ENCODE measurements at regions of chr2 and their contacts with region 1.

Region 1: DNA sequence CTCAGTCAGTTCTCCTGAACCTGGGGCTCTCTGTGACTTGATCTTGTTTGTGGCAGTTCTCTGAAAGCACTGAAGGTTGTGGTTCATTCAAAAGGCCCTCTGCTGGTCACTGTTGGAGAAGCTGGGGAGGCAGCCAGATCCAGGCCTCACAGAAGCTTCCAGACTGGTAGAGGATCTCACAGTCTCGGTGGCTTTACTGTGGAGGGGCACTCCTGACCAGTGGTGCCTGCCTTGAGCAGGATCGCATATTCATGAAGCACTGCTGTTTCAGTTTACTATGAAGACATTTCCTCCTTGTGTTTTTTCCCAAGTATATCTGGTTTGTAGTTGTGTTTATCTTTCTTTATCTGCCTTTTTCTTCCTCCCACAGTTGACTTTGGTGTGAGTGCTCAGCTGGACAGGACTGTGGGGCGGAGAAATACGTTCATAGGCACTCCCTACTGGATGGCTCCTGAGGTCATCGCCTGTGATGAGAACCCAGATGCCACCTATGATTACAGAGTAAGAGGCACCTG is 133.9 kb downstream of the MAP4K4 start:
- DNase-seq: no peak
- ATAC-seq: peak; percentile 91
- H3K4me3 ChIP-seq: no peak overlapping the region
- H3K27ac ChIP-seq: no peak overlapping the region
- H3K4me1 ChIP-seq: peaks cover 6% of the 10 kb centered on the region
- H3K27me3 ChIP-seq: no peaks in the 10 kb centered on the region
- CTCF ChIP-seq: peak; percentile 72 to 79 (median 75)
- EP300 ChIP-seq: no peak
- POLR2A ChIP-seq: no peak
- RAD21 ChIP-seq: peak; percentile 68

Region 2: GRCh38 chr2:101419096-101419663 is 412.2 kb before region 1 on chr2:
- CTCF ChIA-PET with region 1: interaction called, 76 read pairs
- POLR2A ChIA-PET with region 1: no interaction called
- RAD21 ChIA-PET with region 1: interaction called, 23 read pairs
- SMC1A ChIA-PET with region 1: interaction called, 24 read pairs
- in situ Hi-C with region 1: loop called (anchors 5 kb)
- intact Hi-C with region 1: loop called (anchors 1 kb)
- DNase-seq: no peak
- ATAC-seq: peak; percentile 94
- H3K4me3 ChIP-seq: no peak overlapping the region
- H3K27ac ChIP-seq: no peak overlapping the region
- H3K4me1 ChIP-seq: no peaks in the 10 kb centered on the region
- H3K27me3 ChIP-seq: no peaks in the 10 kb centered on the region; a peak in 2 of 4 replicates
- CTCF ChIP-seq: peak; percentile 65 to 70 (median 65)
- EP300 ChIP-seq: no peak
- POLR2A ChIP-seq: no peak
- RAD21 ChIP-seq: peak; percentile 81

Region 3: DNA sequence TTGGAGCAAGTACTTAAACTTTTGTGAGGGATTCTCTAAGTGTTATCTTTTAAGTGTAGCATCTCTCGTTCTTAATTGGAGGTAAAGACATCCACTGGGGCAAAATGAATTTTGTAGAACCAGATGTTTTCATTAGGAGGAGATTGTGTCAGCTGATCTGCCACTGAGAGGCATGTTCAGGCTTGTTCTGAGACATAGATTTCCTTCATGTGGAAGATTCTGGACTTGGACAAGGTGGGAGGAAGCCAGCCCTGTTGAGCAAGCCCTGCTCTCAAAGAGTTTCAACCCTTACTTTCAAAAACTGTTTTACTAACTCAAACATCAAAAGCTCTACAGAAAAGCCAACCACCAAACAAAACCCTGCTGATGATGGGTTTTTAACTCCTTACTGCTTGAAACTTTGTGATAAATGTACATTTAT is 127.4 kb before region 1 on chr2:
- CTCF ChIA-PET with region 1: interaction called, 6 read pairs
- POLR2A ChIA-PET with region 1: no interaction called
- RAD21 ChIA-PET with region 1: interaction called, 9 read pairs
- SMC1A ChIA-PET with region 1: interaction called, 20 read pairs
- in situ Hi-C with region 1: no loop called
- intact Hi-C with region 1: loop called (anchors 5 kb)
- DNase-seq: no peak
- ATAC-seq: peak; percentile 14
- H3K4me3 ChIP-seq: no peak overlapping the region
- H3K27ac ChIP-seq: no peak overlapping the region
- H3K4me1 ChIP-seq: peaks cover 15% of the 10 kb centered on the region
- H3K27me3 ChIP-seq: peaks cover 0 to 6% of the 10 kb centered on the region in 2 experiments; a peak in 1 of 4 replicates
- CTCF ChIP-seq: no peak
- EP300 ChIP-seq: no peak
- POLR2A ChIP-seq: no peak
- RAD21 ChIP-seq: no peak

Region 4: DNA sequence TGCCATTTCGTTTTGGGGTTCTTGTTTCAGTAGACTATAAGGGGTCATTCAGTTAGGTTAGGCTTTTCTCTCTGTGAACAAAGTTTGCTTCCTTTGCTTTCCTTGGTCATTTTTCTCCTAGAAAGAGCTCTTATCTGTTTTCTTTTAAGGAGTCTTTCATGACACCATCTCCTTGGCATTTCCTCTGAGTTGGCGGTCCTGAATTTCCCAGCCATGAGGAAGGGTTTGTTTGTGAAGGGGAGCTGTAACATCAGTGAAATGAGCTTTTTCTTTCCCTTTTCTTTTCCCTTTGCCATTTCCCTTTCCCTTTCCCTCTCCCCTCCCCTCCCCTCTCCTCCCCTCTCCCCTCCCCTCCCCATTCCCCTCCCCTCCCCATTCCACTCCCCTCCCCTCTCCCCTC is 72.2 kb before region 1 on chr2:
- CTCF ChIA-PET with region 1: interaction called, 204 read pairs
- POLR2A ChIA-PET with region 1: no interaction called
- RAD21 ChIA-PET with region 1: interaction called, 6 read pairs
- SMC1A ChIA-PET with region 1: interaction called, 7 read pairs
- in situ Hi-C with region 1: no loop called
- intact Hi-C with region 1: loop called (anchors 5 kb)
- DNase-seq: no peak
- ATAC-seq: no peak
- H3K4me3 ChIP-seq: no peak overlapping the region
- H3K27ac ChIP-seq: no peak overlapping the region
- H3K4me1 ChIP-seq: peaks cover 26% of the 10 kb centered on the region
- H3K27me3 ChIP-seq: no peaks in the 10 kb centered on the region; a peak in 1 of 4 replicates
- CTCF ChIP-seq: no peak
- EP300 ChIP-seq: no peak
- POLR2A ChIP-seq: no peak
- RAD21 ChIP-seq: no peak

Region 5: DNA sequence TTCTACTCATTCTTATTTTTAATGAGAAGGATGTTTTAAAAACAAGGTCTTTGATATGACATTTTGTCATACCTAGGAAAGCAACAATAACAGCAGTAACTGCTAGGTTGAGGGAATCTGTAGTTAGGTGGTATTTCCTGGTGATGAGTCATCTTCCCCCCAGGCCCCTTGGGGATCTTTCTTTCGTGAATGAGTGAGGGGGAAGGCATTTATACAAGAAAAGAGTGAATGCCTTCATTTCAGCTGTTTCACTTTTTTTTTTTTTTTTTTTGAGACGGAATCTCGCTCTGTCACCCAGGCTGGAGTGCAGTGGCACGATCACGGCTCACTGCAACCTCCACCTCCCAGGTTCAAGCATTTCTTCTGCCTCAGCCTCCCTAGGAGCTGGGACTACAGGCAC is 25.3 kb before region 1 on chr2:
- CTCF ChIA-PET with region 1: interaction called, 7 read pairs
- POLR2A ChIA-PET with region 1: no interaction called
- RAD21 ChIA-PET with region 1: no interaction called
- SMC1A ChIA-PET with region 1: interaction called, 10 read pairs
- in situ Hi-C with region 1: no loop called
- intact Hi-C with region 1: no loop called
- DNase-seq: no peak
- ATAC-seq: peak; percentile 75
- H3K4me3 ChIP-seq: no peak overlapping the region
- H3K27ac ChIP-seq: no peak overlapping the region
- H3K4me1 ChIP-seq: 0 out of 2 replicates have a peak, but pooled peaks cover 2% of the 10 kb centered on the region
- H3K27me3 ChIP-seq: no peaks in the 10 kb centered on the region
- CTCF ChIP-seq: no peak
- EP300 ChIP-seq: no peak
- POLR2A ChIP-seq: no peak
- RAD21 ChIP-seq: no peak

Region 6: GRCh38 chr2:102063941-102064678 is 232.7 kb after region 1 on chr2:
- CTCF ChIA-PET with region 1: no interaction called
- POLR2A ChIA-PET with region 1: no interaction called
- RAD21 ChIA-PET with region 1: no interaction called
- SMC1A ChIA-PET with region 1: no interaction called
- in situ Hi-C with region 1: no loop called
- intact Hi-C with region 1: no loop called
- DNase-seq: no peak
- ATAC-seq: peak; percentile 69
- H3K4me3 ChIP-seq: no peak overlapping the region
- H3K27ac ChIP-seq: no peak overlapping the region
- H3K4me1 ChIP-seq: no peaks in the 10 kb centered on the region; the same call in 1 of the 2 replicates
- H3K27me3 ChIP-seq: no peaks in the 10 kb centered on the region; a peak in 1 of 4 replicates
- CTCF ChIP-seq: no peak
- EP300 ChIP-seq: no peak
- POLR2A ChIP-seq: no peak
- RAD21 ChIP-seq: no peak

Measured in GM12878 (cell line).